ENCODE measurements at regions of chr18 and their contacts with region 1.

Region 1: GRCh38 chr18:7272311-7273049 is 41.6 kb downstream of the LRRC30 start:
- DNase-seq: peak; percentile 34
- H3K4me3 ChIP-seq: no peak overlapping the region
- H3K27ac ChIP-seq: no peak overlapping the region
- H3K4me1 ChIP-seq: no peaks in the 10 kb centered on the region
- H3K27me3 ChIP-seq: no peaks in the 10 kb centered on the region
- CTCF ChIP-seq: no peak

Region 2: GRCh38 chr18:7566567-7567473 is 294.3 kb after region 1 on chr18 and contains the start of gene PTPRM:
- intact Hi-C with region 1: loop called (anchors 5 kb)
- DNase-seq: peak; percentile 65
- H3K4me3 ChIP-seq: peak within 1 kb of the TSS; percentile 74
- H3K27ac ChIP-seq: peak within 1 kb of the TSS; percentile 89
- H3K4me1 ChIP-seq: no peaks in the 10 kb centered on the region
- H3K27me3 ChIP-seq: peaks cover 22% of the 10 kb centered on the region
- CTCF ChIP-seq: no peak
- total RNA-seq, gene PTPRM: 8.1 to 13.9 TPM

Region 3: GRCh38 chr18:8478166-8478967 is 1205.9 kb after region 1 on chr18:
- intact Hi-C with region 1: loop called (anchors 10 kb)
- DNase-seq: peak; percentile 67
- H3K4me3 ChIP-seq: no peak overlapping the region
- H3K27ac ChIP-seq: no peak overlapping the region
- H3K4me1 ChIP-seq: no peaks in the 10 kb centered on the region
- H3K27me3 ChIP-seq: no peaks in the 10 kb centered on the region
- CTCF ChIP-seq: peak; percentile 81